ENCODE measurements at regions of chr7 and their contacts with region 1.

Region 1: GRCh38 chr7:104231054-104232046 is 23.5 kb upstream of the ORC5 start:
- DNase-seq: peak; percentile 46
- H3K4me3 Mint-ChIP-seq: no peak overlapping the region
- H3K27ac Mint-ChIP-seq: no peak overlapping the region
- H3K4me1 Mint-ChIP-seq: no peaks in the 10 kb centered on the region
- H3K27me3 Mint-ChIP-seq: peaks cover 10% of the 10 kb centered on the region

Region 2: GRCh38 chr7:104207731-104208420 is 23.5 kb before region 1 on chr7 and contains the start of gene ORC5:
- CTCF ChIA-PET with region 1: interaction called, 10 read pairs
- POLR2A ChIA-PET with region 1: no interaction called
- intact Hi-C with region 1: no loop called
- DNase-seq: peak; percentile 86
- H3K4me3 Mint-ChIP-seq: peak within 1 kb of the TSS; percentile 96
- H3K27ac Mint-ChIP-seq: peak within 1 kb of the TSS; percentile 92
- H3K4me1 Mint-ChIP-seq: peaks cover 38% of the 10 kb centered on the region
- H3K27me3 Mint-ChIP-seq: peaks cover 16% of the 10 kb centered on the region
- total RNA-seq, gene ORC5: 18.2 to 19.4 TPM

Region 3: DNA sequence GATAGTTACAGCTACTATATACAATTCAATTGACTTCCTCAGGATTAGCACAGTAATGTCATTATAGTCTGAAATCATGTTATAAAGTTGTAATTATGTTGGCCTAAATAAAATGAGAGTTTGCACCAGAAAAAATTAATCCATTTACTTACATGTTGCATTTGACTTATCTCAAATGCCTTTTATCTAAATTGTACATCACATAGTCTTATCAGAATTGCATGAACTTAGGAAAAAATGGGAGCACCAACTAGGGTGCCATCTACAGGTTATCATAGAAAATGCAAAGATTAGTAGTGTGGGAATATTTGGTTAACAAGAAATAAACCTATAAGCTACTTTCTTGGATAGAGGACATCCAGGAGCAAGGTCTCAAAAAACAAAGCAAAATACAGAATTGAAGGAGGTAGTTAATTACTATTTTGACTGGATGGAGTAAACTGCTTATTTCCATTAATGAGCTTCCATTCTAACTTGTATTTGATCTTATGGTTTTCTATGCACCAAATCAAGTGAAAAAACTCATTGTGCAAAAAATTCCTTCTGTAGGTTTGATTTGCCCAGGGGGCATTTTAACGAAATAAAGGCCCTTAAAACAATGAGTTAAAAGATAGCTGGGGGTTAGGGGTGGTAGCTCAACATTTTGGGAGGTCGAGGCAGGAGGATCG is 36.5 kb after region 1 on chr7:
- CTCF ChIA-PET with region 1: interaction called, 30 read pairs
- POLR2A ChIA-PET with region 1: no interaction called
- intact Hi-C with region 1: loop called (anchors 5 kb)
- DNase-seq: no peak
- H3K4me3 Mint-ChIP-seq: no peak overlapping the region
- H3K27ac Mint-ChIP-seq: no peak overlapping the region
- H3K4me1 Mint-ChIP-seq: no peaks in the 10 kb centered on the region
- H3K27me3 Mint-ChIP-seq: peaks cover 11% of the 10 kb centered on the region

Region 4: DNA sequence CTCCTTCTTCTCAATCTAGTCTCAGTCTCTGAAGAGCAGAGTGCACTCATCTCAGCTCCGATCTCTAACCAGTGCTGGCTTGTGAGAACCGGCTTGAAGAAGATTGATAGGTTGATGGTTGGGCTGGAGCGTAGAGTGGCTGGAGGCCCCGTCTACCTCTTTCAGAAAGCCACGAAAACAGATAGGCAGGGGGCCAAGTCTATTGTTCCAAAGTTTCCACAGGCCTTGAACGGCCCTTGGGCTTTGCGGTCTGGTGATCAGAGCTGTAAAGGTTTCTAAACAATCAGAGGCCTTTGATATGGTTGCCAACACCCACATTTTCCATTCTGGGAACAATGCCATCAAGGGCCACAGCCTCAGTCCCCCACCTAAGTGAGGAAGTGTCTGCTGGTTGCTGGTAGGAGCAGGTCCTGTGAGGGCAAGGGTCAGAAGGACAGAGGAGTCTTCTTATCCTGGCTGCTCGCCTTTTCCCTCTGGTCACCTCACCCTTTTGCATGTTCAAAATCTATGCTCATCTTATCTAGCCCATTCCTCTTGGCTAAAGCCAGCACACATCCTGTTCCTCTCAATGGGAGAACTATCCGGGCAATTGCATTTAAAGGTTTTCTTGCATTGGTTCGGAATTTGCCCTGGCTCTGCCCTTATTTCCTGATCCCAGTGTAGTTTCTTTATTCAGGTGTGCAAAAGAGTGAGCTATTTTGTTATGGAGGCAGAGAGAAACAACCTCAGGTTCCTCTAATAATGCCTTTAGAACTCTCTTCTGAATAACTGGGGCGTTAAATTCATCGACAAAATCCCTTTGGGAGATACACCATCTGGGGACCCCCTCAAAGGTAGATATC is 712.4 kb after region 1 on chr7:
- CTCF ChIA-PET with region 1: no interaction called
- POLR2A ChIA-PET with region 1: no interaction called
- intact Hi-C with region 1: no loop called
- DNase-seq: peak; percentile 89
- H3K4me3 Mint-ChIP-seq: peak overlapping the region; percentile 89
- H3K27ac Mint-ChIP-seq: peak overlapping the region; percentile 98
- H3K4me1 Mint-ChIP-seq: peaks cover 62% of the 10 kb centered on the region
- H3K27me3 Mint-ChIP-seq: no peaks in the 10 kb centered on the region

Measured in activated CD4-positive, alpha-beta memory T cell treated with anti-CD3 and anti-CD28 coated beads for 36 hours (primary cell).